ENCODE measurements at regions of chr16 and their contacts with region 1.

Region 1: DNA sequence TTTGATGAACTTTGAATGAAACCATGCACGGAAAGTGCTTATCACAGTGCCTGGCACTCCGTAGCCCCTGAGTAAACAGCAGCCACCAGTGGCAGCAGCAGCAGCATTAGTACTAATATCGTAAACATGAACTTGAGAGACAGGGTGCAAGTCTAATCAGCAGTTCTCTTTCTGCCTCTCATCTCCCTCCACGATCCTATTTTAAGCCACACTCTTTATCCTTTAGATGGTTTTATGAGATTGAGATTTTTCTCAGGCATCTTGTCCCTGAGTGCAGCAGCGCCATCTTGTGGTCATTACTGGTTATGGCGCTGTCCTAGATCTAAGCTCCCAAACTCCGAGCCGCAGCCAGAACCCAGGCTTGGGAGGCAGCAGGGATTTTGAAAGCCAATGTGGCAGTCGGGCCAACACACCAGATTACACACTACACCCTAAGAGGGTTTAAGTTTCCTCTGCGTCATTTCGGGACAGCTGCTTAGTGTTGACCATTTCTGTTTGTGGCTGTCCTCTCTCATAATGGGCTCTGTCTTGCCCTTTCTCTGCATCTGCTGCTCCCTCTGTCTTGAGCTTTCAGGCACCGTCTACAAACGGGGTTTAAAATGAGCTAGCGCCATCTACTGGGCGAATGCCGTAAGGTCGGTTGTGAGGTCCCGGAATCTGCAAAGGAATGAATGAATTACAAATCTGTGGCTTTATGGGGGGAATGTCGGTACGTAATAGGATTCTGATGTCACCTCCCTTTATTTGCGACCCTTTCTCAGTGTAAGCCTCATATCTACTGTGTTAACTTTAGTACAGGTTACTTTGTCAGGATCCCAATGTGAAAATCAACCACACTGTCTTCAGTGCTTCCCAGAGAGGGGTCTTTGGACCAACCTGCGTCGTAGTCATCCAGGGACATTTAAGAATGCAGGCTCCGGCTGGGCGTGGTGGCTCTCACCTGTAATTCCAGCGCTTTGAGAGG is 64.5 kb downstream of the CYLD start:
- DNase-seq: peak; percentile 84
- ATAC-seq: peak; percentile 95
- H3K4me3 ChIP-seq: peak overlapping the region; percentile 65
- H3K27ac ChIP-seq: no peak overlapping the region
- H3K4me1 ChIP-seq: no peaks in the 10 kb centered on the region
- H3K27me3 ChIP-seq: no peaks in the 10 kb centered on the region
- CTCF ChIP-seq: peak; percentile 86

Region 2: GRCh38 chr16:50373780-50374179 is 432.6 kb before region 1 on chr16:
- CTCF ChIA-PET with region 1: no interaction called
- POLR2A ChIA-PET with region 1: no interaction called
- intact Hi-C with region 1: loop called (anchors 2 kb)
- DNase-seq: no peak
- ATAC-seq: no peak
- H3K4me3 ChIP-seq: no peak overlapping the region
- H3K27ac ChIP-seq: no peak overlapping the region
- H3K4me1 ChIP-seq: no peaks in the 10 kb centered on the region
- H3K27me3 ChIP-seq: no peaks in the 10 kb centered on the region
- CTCF ChIP-seq: no peak

Region 3: DNA sequence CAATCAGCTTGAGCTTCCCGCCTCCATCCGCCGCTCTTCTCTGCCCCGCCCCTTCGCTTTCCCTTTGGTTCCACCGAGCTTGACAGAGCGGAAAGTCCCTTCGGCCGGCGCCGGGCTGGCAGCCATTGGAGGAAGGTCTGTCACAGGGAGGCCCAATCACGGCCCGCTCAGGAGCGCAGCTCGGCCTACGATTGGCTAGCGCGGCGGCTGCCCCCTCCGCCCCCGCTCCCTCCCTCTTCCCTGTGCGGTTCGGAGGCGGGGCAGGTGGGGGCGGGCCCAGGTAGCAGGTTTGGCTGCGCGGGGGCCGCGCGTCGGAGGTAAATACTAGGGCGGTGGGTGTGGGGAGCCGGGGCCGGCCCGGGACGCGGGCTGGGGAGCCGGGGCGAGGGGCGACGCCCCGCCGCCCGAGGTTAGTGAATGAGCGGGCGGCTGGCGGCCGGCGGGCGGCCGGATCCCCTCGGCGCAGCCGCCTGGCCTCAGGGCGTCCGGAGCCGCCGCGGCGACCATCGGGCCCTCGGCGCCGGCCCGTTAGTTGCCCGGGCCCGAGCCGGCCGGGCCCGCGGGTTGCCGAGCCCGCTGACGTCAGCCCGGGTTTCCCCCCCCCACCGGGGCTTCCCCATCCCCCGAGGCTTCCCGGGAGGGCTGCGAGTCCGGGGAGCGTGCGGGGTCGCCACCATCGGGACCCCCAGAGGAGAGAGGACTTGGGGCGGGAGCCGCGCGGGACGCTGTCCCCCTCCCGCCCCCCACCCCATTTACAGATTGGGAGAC is 64.4 kb before region 1 on chr16 and contains the start of gene CYLD:
- CTCF ChIA-PET with region 1: interaction called, 19 read pairs
- POLR2A ChIA-PET with region 1: no interaction called
- intact Hi-C with region 1: loop called (anchors 1 kb)
- DNase-seq: peak; percentile 97
- ATAC-seq: peak; percentile 97
- H3K4me3 ChIP-seq: peak within 1 kb of the TSS; percentile 77
- H3K27ac ChIP-seq: no peak within 1 kb of the TSS
- H3K4me1 ChIP-seq: peaks cover 34% of the 10 kb centered on the region
- H3K27me3 ChIP-seq: no peaks in the 10 kb centered on the region
- CTCF ChIP-seq: no peak
- total RNA-seq, gene CYLD: 8.5 and 8.6 TPM in 2 replicates

Region 4: GRCh38 chr16:50791522-50791921 is 14.9 kb before region 1 on chr16:
- CTCF ChIA-PET with region 1: no interaction called
- POLR2A ChIA-PET with region 1: no interaction called
- intact Hi-C with region 1: no loop called
- DNase-seq: no peak
- ATAC-seq: no peak
- H3K4me3 ChIP-seq: no peak overlapping the region
- H3K27ac ChIP-seq: no peak overlapping the region
- H3K4me1 ChIP-seq: no peaks in the 10 kb centered on the region
- H3K27me3 ChIP-seq: no peaks in the 10 kb centered on the region
- CTCF ChIP-seq: no peak

Region 5: GRCh38 chr16:50841081-50841886 is 34.9 kb after region 1 on chr16:
- CTCF ChIA-PET with region 1: no interaction called
- POLR2A ChIA-PET with region 1: no interaction called
- intact Hi-C with region 1: no loop called
- DNase-seq: no peak
- ATAC-seq: no peak
- H3K4me3 ChIP-seq: no peak overlapping the region
- H3K27ac ChIP-seq: no peak overlapping the region
- H3K4me1 ChIP-seq: no peaks in the 10 kb centered on the region
- H3K27me3 ChIP-seq: no peaks in the 10 kb centered on the region
- CTCF ChIP-seq: no peak